ENCODE measurements at regions of chrX and their contacts with region 1.

Region 1: DNA sequence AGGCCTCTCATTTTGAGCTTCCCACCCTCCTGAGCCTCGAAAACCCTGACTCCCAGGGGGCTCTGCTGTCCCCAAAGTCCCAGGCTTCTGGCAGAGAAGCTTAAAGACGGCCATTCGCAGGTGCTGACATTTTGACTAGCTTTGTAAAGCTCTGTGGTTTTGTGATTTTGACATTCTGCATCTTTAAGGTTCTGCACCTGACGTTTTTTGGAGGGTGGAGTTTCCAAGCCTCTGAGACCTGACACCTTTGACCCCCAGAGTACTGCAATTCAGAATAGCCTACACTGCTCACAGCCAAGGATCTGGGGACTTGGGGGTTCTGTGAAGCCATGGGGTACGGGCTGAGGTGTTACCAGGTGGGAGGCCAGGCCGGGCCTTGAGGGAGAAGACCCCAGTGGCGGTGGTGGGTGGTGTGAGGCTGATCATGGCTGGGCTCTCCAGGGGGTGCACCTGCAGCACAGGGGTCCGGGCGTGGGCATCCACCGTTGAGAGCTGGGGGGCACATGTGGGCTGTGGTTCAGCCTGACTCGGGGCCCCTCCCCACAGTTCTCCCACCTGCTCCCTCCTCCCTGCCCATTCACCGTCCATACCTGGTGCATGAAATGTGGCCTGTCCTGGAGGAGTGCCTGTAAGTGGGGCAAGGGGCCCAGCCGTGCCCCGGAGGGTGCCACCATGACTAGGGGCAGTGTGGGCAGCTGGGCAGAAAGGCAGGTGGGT is 7.3 kb downstream of the FOXP3 start:
- DNase-seq: no peak
- H3K4me3 ChIP-seq: no peak overlapping the region
- H3K27ac ChIP-seq: no peak overlapping the region
- H3K4me1 ChIP-seq: no peaks in the 10 kb centered on the region; a peak in 1 of 7 replicates
- H3K27me3 ChIP-seq: no peaks in the 10 kb centered on the region
- CTCF ChIP-seq: no peak
- EP300 ChIP-seq: no peak
- POLR2A ChIP-seq: no peak
- RAD21 ChIP-seq: no peak

Region 2: DNA sequence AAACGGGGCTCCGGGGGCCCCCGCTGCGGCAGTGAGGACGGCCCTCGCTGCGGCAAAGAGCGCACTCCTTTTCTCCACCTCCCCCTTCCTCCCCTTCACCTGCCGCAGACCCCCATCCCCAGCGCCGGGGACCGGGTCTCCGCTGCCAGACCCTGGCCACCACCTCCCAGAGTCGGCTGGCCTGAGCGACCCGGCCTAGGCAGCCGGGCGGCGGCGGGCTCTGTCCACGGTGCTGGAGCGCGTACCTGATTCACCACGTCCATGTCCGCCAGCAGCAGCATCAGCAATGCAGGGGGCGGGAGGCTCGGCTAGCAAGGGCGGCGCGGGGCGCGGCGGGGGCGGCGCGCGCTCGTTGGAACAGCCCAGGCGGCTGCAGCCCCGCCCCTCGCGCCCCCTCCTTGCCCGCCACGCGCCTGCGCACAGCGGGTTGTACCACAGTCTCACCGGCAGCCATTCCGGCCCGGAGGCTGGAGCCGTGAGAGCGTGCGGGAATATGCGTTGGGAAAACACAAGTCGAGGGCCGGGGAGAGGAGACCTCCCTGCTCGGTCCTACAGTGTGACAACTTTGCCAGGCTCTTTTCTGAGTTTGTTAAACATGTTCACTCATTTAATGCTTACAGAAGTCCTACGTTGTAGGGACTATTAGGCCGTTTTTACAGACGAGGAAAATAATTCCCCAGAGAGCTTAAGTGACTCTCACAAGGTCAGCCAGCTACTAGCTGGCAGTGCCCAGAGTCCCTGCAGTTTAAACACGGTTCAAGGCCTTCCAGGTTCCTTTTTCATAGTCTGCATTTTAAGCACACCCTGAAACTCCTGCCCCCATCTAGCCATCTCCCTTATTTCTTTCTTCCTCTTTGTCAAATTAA is 57.1 kb before region 1 on chrX and contains the start of gene SYP:
- CTCF ChIA-PET with region 1: no interaction called
- POLR2A ChIA-PET with region 1: no interaction called
- DNase-seq: peak; percentile 64 to 88
- H3K4me3 ChIP-seq: peak within 1 kb of the TSS; percentile 37 to 67 (median 42)
- H3K27ac ChIP-seq: no peak within 1 kb of the TSS; the same call in 1 of the 2 replicates
- H3K4me1 ChIP-seq: peaks cover 0 to 11% (median 5%) of the 10 kb centered on the region in 4 experiments; a peak in 5 of 7 replicates
- H3K27me3 ChIP-seq: no peaks in the 10 kb centered on the region
- CTCF ChIP-seq: no peak
- EP300 ChIP-seq: peak in 1 of 2 experiments; percentile 100; a peak in 2 of 3 replicates
- POLR2A ChIP-seq: peak in 1 of 2 experiments; percentile 74; a peak in 1 of 3 replicates
- RAD21 ChIP-seq: peak in 1 of 2 experiments; percentile 24; a peak in 1 of 4 replicates
- total RNA-seq, gene SYP: 10.2 and 10.8 TPM in 2 replicates

Region 3: DNA sequence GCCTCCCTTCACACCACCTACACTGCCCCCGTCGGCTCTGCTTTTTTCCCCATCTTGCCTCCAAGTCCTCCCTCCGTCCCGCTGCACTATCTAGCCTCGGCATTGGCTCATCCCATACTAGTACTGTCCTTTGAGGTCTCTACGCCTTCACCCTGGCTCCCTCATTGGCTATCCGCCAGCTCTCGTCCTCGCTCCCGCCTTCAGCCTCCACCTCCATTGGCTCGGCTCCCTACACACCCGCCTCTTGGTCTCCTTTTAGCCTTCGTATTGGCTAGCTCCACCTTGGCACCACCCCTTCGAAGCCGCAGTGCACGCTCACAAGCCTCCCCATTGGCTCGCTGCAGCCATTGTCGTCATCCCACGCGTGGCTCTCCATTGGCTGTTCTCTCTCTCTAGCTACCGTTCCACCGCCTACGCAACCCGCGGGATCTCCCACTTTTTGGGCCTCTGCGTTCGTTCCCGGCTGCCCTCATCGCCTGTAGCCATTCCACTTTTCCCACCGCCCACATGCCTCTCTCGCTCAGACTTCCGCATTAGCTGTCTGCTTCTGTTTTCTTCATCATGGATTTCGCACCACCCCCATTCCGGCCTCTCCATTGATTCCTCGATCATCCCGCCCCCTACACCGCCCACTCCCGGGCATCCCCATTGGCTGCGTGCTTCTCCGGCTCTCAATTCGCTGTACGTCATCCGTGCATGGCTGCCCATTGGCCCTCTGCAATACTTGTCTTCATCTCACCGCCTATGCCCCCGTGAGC is 12.0 kb after region 1 on chrX:
- CTCF ChIA-PET with region 1: no interaction called
- POLR2A ChIA-PET with region 1: interaction called, 10 read pairs
- DNase-seq: peak; percentile 83 to 85
- H3K4me3 ChIP-seq: peak overlapping the region; percentile 47 to 99 (median 73)
- H3K27ac ChIP-seq: peak overlapping the region; percentile 95
- H3K4me1 ChIP-seq: peaks cover 0 to 14% (median 5%) of the 10 kb centered on the region in 4 experiments; a peak in 4 of 7 replicates
- H3K27me3 ChIP-seq: no peaks in the 10 kb centered on the region
- CTCF ChIP-seq: no peak
- EP300 ChIP-seq: no peak
- POLR2A ChIP-seq: peak; percentile 70 to 85
- RAD21 ChIP-seq: no peak